ENCODE measurements at regions of chr5 and their contacts with region 1.

Region 1: DNA sequence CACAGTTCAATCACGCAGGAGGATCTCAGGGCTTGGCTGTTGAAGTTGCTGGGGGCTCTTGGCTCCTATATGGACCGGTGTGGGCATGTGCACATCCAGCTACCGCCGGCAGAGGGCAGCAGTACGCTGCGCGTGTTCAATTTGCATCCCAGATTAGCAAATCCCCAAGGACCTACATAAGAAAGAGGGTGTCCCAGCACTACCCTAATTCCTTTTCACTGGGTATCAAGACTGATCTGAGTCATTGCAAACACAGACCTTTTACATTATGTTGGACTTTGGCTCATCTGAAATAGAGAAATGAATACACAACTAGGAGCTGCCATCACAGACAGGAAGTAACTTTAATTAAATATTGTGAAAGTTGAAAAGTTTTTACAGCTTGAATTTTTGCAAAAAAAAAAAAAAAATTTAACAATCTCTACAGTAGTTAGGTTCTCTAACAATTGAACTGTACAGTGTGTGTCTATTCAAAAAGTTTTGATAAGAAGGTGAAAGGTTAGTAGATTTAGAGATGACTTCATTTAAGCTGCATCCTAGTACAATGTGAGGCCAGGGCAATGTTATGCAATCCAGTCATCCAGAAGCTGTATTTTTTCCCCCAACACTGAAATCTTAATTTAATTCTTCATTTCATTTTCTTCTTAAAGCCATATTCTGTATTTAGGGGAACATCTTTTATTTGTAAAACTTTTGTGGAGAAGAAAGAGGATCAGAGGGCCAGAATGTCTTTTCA is 404.0 kb downstream of the EBF1 start:
- DNase-seq: peak; percentile 45
- H3K4me3 ChIP-seq: no peak overlapping the region
- CTCF ChIP-seq: peak; percentile 87

Region 2: GRCh38 chr5:158174918-158175851 is 520.6 kb before region 1 on chr5:
- CTCF ChIA-PET with region 1: interaction called, 78 read pairs
- POLR2A ChIA-PET with region 1: no interaction called
- DNase-seq: peak; percentile 28
- H3K4me3 ChIP-seq: no peak overlapping the region
- CTCF ChIP-seq: peak; percentile 81

Region 3: GRCh38 chr5:158292981-158293380 is 402.8 kb before region 1 on chr5:
- CTCF ChIA-PET with region 1: no interaction called
- POLR2A ChIA-PET with region 1: no interaction called
- DNase-seq: no peak
- H3K4me3 ChIP-seq: no peak overlapping the region
- CTCF ChIP-seq: no peak

Region 4: DNA sequence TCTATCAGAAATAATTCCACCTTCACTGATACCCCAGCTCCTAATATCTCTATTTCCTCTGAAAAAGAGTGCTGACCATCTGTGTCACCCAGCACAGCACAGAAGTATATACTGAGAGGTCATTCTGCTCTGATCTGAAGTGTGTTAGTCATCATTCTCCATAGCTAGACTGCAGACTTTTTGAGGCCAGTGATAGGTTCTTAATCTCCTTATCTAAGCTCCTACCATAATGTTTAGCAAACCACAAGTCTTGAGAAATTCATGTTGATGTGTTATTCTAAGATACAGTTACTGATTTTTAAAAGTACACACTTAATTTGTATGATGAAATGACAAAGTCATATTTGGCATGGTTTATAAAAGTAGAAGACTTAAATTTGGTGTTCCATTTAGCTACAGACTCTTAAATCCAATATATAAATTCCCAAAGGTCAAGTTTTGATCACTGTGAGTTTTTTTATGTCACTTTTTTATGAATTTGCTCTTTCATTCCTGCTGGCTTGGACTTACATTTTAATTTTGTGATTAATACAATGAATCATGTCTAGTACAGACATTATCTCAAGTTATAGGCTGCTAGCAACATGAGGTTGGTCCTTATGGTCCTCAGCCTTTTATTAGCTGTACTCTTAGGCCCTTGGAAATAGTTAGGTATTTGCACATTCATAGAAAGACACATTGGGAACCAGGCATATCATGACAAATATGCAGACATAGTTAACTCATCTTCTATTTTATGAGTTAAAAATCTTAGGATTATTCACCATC is 23.2 kb after region 1 on chr5:
- CTCF ChIA-PET with region 1: interaction called, 11 read pairs
- POLR2A ChIA-PET with region 1: interaction called, 22 read pairs
- DNase-seq: peak; percentile 82
- H3K4me3 ChIP-seq: no peak overlapping the region
- CTCF ChIP-seq: no peak

Region 5: GRCh38 chr5:158777647-158778350 is 82.0 kb after region 1 on chr5:
- CTCF ChIA-PET with region 1: no interaction called
- POLR2A ChIA-PET with region 1: no interaction called
- DNase-seq: no peak
- H3K4me3 ChIP-seq: no peak overlapping the region
- CTCF ChIP-seq: no peak

Region 6: DNA sequence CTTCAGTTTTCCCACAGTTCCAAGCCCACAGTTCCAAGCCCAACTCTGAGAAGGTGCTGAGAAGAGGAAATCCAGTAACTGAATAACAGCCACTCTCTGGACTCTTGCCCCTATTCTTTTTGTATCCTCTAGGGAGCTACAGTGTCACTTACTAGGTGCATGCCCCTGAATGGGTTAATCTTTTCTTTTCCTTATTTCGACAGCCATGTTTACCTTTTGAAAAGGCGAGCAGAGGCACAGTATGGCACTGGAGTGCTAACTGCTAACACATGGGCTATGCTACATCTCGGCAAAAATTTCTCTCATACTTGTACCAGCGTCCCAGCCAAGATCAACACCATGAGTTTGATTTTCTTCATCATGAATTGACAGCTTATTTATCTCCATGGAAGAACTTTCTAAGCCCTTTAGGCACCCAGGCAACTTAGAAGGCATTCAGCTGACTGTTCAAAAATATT is 181.4 kb after region 1 on chr5:
- CTCF ChIA-PET with region 1: interaction called, 10 read pairs
- POLR2A ChIA-PET with region 1: no interaction called
- DNase-seq: no peak
- H3K4me3 ChIP-seq: no peak overlapping the region
- CTCF ChIP-seq: no peak

Region 7: DNA sequence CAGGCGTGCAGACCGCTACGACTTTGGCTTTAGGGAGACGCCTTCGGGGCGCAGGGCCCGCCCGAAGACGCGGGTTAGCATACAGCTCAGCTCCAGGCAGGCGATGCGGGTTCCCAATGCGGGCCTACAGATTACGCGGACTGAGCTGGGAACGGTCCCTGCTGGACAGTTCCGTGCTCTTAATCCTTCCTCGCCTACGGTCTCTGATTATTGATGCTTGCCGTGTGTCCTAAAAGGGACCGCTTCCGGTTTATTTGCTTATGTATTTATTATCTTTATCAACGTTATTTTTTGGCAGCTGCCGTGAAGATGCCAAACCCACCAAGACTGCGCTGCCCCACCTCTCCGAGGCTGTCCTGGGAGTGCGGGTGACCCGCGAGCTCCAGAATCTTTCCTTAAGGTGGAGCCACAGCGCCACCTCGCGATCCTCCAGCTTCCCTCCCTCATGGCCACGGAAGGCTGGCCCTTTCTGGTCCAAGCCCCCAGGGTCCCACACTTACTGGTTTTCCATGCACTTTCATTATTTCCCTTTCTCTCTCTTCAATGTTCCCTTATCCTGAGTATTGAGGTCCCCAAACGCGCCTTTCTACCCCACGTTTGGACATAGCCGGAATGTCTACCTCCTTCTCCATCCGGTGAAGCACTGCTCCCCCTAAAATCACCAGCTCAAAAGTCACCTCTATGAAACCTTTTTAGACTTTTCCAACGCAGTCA is 411.0 kb after region 1 on chr5:
- CTCF ChIA-PET with region 1: interaction called, 462 read pairs
- POLR2A ChIA-PET with region 1: interaction called, 9 read pairs
- DNase-seq: no peak
- H3K4me3 ChIP-seq: peak overlapping the region; percentile 43
- CTCF ChIP-seq: peak; percentile 90

Region 8: DNA sequence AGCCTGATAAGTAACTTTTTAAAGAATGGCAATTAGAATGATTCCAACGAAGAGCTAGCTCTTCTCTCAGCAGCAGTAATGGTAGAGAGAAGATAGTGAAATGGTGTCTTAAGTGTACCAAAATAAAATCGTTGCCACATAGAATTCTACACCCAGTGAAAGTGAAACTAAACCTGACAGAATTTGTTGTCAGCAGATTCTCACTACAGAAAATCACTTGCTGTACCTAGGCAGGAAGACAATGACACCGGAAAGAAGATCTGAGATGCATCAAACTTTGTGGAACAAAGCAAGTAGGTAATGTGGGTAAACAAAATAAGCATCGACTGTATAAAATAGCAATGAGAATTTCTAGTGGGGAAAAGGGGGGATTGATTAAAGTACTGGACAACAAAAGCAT is 424.7 kb after region 1 on chr5:
- CTCF ChIA-PET with region 1: interaction called, 16 read pairs
- POLR2A ChIA-PET with region 1: no interaction called
- DNase-seq: no peak
- H3K4me3 ChIP-seq: no peak overlapping the region
- CTCF ChIP-seq: no peak

Measured in AG04449 (cell line).